SK-N-SH (cell line): ENCODE measurements at regions of chr14 and their contacts with region 1.

Region 1: GRCh38 chr14:50773632-50774541 is 57.1 kb downstream of the NIN start:
- DNase-seq: peak; percentile 76
- H3K4me3 ChIP-seq: no peak overlapping the region
- H3K27ac ChIP-seq: peak overlapping the region in 1 of 2 experiments; percentile 73; a peak in 1 of 4 replicates
- H3K4me1 ChIP-seq: peaks cover 5 to 21% of the 10 kb centered on the region in 2 experiments; a peak in 3 of 4 replicates
- H3K27me3 ChIP-seq: no peaks in the 10 kb centered on the region
- CTCF ChIP-seq: peak; percentile 90
- EP300 ChIP-seq: no peak
- RAD21 ChIP-seq: peak; percentile 86

Region 2: DNA sequence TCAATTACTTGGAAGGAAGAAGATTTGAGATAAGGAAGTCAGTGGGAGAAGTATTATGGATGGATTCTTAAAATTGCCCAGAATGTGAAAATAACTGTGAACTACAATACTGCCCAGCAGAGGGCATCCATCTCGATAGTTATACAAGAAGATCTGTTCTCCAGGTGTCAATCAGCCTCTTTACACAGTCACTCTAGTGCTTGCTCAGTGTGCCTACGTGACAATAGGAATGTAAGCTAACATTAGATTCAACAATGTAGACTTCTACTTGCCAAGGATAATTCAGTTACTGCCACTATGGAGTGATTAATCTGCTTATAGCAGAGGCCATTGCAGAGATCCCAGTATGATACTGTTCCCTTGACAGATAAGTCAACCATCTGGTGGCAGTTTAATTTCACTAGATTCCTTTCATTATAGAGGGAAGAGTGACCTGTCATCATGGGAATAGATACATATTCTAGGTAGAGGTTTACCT is 230.9 kb before region 1 on chr14:
- CTCF ChIA-PET with region 1: interaction called, 37 read pairs
- POLR2A ChIA-PET with region 1: no interaction called
- DNase-seq: peak; percentile 51
- H3K4me3 ChIP-seq: no peak overlapping the region; a peak in 1 of 4 replicates
- H3K27ac ChIP-seq: peak overlapping the region in 1 of 2 experiments; percentile 48; a peak in 2 of 4 replicates
- H3K4me1 ChIP-seq: no peaks in the 10 kb centered on the region; a peak in 1 of 4 replicates
- H3K27me3 ChIP-seq: no peaks in the 10 kb centered on the region
- CTCF ChIP-seq: peak; percentile 68
- EP300 ChIP-seq: peak in 1 of 2 experiments; percentile 73; a peak in 1 of 4 replicates
- RAD21 ChIP-seq: peak; percentile 62

Region 3: GRCh38 chr14:50605766-50606165 is 168.1 kb before region 1 on chr14:
- CTCF ChIA-PET with region 1: interaction called, 23 read pairs
- POLR2A ChIA-PET with region 1: no interaction called
- DNase-seq: no peak
- H3K4me3 ChIP-seq: no peak overlapping the region
- H3K27ac ChIP-seq: no peak overlapping the region
- H3K4me1 ChIP-seq: peaks cover 0 to 18% of the 10 kb centered on the region in 2 experiments; a peak in 3 of 4 replicates
- H3K27me3 ChIP-seq: no peaks in the 10 kb centered on the region
- CTCF ChIP-seq: no peak
- EP300 ChIP-seq: no peak
- RAD21 ChIP-seq: no peak

Region 4: DNA sequence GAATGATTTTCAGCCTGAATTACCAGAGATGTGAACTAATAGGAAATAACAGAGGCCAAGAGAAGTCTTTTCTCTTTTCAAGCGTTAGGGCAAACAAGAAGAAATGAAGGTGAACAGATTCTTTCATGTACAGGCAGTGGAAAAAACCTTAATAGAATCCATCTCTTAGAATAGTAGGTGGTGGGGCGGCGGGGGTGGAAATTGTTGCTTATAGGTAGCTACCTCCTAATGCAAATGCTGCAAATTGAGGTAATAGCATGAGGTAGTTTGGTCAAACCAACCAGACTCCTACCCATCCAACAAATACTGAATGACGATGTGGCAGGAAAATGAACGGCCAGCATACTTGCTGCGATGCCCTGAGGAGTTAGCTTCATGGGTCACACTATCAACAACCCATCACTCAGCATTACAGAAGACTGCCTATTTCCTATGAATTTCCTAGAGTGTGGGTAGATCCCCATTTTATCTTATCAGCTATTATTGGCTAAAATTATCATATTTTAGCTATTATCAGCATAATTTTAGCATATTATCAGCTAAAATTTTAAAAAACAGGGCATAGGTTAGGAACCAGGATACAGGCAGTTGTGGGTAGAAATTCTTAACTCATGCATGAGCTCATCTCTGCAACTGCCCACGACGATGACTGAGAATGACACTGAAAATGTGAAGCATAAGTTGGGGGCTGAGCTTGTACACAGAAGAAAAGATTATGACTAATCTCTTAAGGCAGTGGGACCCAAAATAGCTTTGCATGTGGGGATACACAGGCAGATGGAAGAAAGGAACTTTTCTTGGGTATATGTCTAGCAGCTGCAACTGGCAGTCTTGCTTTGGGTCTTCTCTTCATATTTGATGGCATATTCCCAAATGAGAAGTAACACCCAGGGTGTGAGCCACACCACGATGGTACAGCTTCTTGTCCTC is 11.6 kb before region 1 on chr14:
- CTCF ChIA-PET with region 1: interaction called, 88 read pairs
- POLR2A ChIA-PET with region 1: interaction called, 3 read pairs
- DNase-seq: no peak
- H3K4me3 ChIP-seq: no peak overlapping the region
- H3K27ac ChIP-seq: peak overlapping the region in 1 of 2 experiments; percentile 58; a peak in 2 of 4 replicates
- H3K4me1 ChIP-seq: peaks cover 5 to 7% of the 10 kb centered on the region in 2 experiments
- H3K27me3 ChIP-seq: no peaks in the 10 kb centered on the region
- CTCF ChIP-seq: no peak
- EP300 ChIP-seq: peak in 1 of 2 experiments; percentile 47; a peak in 1 of 4 replicates
- RAD21 ChIP-seq: no peak